Common myeloid progenitor, CD34-positive (primary cell): ENCODE measurements at regions of chr20 and their contacts with region 1.

Region 1: DNA sequence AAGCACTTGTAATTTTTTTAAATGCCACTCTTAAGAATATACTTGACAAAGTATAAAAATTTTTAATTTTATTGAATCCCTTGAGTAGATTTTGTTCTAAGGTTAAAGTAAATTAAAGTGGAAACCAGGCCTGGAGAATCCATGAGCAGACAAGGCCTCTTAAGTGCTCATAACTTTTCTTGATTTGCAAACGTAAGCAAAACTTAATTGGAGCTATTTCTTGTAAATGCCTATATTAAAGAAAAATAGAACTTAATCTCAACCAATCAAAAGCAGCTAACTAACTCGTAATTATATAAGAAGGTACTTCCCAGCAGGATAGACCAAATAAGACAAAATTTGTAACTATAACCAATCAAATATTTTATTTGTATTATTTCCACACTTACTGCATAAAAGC is 12.7 kb upstream of the DEFB129 start:
- DNase-seq: no peak
- H3K4me3 ChIP-seq: no peak overlapping the region
- H3K27ac ChIP-seq: no peak overlapping the region
- H3K4me1 ChIP-seq: no peaks in the 10 kb centered on the region
- H3K27me3 ChIP-seq: peaks cover 0 to 3% (median 0%) of the 10 kb centered on the region in 5 experiments

Region 2: DNA sequence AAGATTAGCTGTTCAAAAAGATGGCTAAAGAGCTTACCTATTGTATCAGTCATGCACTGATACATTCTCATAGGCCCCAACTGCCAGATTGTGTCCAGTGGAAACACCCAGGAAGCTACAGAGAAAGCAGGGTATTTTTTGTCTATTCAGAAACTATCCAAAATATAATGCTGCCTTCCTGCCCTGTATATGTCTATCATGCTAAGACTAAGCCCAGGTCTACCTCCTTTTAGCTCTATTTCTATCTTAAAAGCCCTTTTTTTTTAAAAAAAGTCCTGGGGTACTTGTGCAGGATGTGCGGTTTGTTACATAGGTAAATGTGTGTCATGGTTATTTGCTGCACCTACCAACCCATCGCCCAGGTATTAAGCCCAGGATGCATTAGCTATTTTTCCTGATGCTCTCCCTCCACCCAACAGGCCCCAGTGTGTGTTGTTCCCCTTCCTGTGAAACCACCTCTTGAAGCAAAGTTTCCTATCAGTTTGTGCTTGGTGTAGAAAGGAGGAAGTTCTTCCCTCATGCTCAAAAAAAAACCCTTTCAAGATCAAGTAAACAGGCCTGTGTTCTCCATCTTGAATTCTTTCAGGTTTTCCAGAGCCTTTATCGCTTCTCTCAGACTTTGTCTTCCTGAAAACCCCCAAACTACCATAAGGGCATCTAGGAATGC is 13.2 kb after region 1 on chr20:
- CTCF ChIA-PET with region 1: interaction called, 19 read pairs
- POLR2A ChIA-PET with region 1: no interaction called
- DNase-seq: peak; percentile 47 to 74 (median 68)
- H3K4me3 ChIP-seq: peak overlapping the region in 1 of 7 experiments; percentile 33
- H3K27ac ChIP-seq: no peak overlapping the region
- H3K4me1 ChIP-seq: peaks cover 6 to 16% (median 13%) of the 10 kb centered on the region in 4 experiments
- H3K27me3 ChIP-seq: no peaks in the 10 kb centered on the region